Motor neuron (in vitro differentiated cells): ENCODE measurements at regions of chr17 and their contacts with region 1.

Region 1: DNA sequence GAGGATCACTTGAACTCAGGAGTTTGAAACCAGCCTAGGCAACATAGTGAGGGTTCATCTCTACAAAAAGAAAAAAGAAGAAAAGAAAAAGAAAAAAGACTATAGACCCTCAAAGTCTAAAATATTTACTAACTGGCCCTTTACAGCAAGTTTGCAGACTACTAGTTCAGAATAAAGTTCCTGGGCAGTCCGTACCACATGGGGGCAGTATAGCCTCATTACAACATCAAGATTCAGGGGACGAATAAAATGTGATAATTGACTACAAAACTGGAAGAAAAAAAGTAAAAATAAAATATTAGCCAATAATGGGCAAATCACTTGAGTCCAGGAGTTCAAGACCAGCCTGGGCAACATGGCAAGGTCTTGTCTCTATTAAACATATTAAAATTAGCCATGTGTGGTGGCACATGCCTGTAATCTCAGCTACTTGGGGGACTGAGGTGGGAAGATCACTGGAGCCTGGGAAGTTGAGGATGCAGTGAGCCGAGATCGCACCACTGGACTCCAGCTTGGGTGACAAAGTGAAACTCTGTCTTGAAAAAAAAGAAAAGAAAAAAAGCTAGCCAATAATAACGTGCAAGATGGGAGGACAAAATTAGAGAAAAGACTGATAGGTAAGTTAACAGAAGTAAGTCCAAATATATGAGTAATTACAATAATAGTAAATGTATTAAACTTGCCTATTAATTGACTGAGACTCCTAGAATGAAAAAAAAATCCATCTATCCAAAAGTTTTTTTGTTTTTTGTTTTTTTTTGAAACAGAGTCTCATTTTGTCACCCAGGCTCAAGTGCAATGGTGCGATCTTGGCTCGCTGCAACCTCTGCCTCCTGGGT is 129.4 kb upstream of the SEC14L1 start:
- ATAC-seq: peak in 2 of 8 experiments; percentile 44 to 65
- H3K4me3 ChIP-seq: no peak overlapping the region
- H3K27ac ChIP-seq: no peak overlapping the region
- H3K4me1 ChIP-seq: peaks cover 9 to 10% of the 10 kb centered on the region in 2 donors

Region 2: GRCh38 chr17:76772842-76773525 is 238.4 kb before region 1 on chr17:
- in situ Hi-C with region 1: no loop called
- ATAC-seq: peak in 4 of 8 experiments; percentile 31 to 99 (median 95)
- H3K4me3 ChIP-seq: no peak overlapping the region
- H3K27ac ChIP-seq: no peak overlapping the region
- H3K4me1 ChIP-seq: no peaks in the 10 kb centered on the region

Region 3: DNA sequence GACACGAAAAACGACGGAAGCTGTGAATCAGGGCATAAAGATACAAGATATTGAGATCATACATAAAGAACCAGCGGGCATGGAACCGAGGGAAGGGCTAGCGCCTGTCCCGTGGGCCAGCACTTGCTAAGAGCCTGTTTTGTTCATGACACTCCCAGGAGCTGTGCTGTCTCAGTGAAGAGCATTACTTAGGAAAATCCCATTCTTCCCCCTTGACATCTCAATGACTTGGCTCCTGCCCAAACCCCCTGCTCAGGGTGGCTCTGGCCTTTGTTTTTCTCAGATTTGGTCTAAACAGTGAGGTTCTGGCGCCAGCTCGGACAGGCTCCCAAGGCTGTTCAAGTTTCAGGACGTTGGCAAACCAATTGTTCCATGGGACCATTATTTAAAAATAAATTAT is 50.3 kb after region 1 on chr17:
- in situ Hi-C with region 1: loop called in 1 of 9 experiments (anchors 10 kb)
- ATAC-seq: peak in 5 of 8 experiments; percentile 56 to 78 (median 75)
- H3K4me3 ChIP-seq: no peak overlapping the region
- H3K27ac ChIP-seq: no peak overlapping the region
- H3K4me1 ChIP-seq: peaks cover 7% of the 10 kb centered on the region in 2 donors